GM13977 (cell line): ENCODE measurements at regions of chr1 and their contacts with region 1.

Region 1: DNA sequence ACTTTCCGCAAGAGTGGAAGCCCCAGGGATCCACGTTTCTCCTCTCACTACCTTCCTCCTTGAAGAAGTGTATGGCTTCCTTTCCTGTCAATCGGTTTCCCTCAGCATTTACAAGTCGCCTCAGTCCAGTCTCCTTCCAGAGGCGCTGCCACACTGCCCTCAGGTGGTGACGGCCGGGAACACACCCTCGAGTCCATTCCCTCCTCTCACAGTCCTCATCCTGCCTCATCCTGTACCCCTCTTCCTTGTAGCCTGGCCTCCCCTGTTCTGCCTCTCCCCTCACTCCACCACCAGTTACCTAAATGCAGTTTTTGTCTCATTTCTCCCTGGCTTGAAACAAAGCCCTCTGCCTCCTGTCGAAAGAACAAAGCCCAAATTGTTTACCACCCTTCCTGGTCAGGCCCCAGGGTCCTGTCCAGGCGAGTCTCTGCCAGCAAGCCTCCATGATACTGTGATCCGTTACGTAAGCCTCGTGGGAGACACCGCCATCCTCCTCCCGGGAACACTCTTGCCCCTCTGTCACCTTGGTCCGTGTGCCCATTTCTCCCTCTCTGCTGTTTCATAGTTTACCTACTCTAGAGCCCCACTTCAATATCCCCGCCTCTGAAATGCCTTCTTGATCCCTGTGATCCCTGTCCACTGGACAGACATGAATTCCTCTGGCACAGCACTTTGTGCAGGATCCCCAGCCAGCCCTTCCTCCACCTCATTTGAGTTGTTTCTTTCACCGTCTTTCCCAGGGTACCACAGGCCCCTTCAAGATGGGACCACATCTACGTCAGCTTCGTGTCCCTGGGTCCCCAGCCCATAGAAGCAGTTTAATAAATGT is 23.3 kb upstream of the LSM10 start:
- DNase-seq: peak; percentile 76
- CTCF ChIP-seq: peak; percentile 96

Region 2: GRCh38 chr1:35925741-35926140 is 495.3 kb before region 1 on chr1:
- in situ Hi-C with region 1: no loop called
- DNase-seq: no peak
- CTCF ChIP-seq: no peak

Region 3: GRCh38 chr1:36149237-36149972 is 271.6 kb before region 1 on chr1 and contains the start of gene TRAPPC3:
- in situ Hi-C with region 1: loop called (anchors 25 kb)
- DNase-seq: peak; percentile 97
- CTCF ChIP-seq: peak; percentile 98

Region 4: GRCh38 chr1:36306902-36307456 is 114.1 kb before region 1 on chr1:
- in situ Hi-C with region 1: no loop called
- DNase-seq: peak; percentile 99
- CTCF ChIP-seq: no peak

Region 5: GRCh38 chr1:36369061-36369861 is 51.8 kb before region 1 on chr1:
- in situ Hi-C with region 1: no loop called
- DNase-seq: peak; percentile 83
- CTCF ChIP-seq: peak; percentile 90